ENCODE measurements at regions of chr19 and their contacts with region 1.

Region 1: GRCh38 chr19:15251749-15252397 is 19.6 kb upstream of the EPHX3 start:
- DNase-seq: peak; percentile 79
- H3K4me3 ChIP-seq: no peak overlapping the region
- H3K27ac ChIP-seq: peak overlapping the region; percentile 65
- H3K4me1 ChIP-seq: peaks cover 21% of the 10 kb centered on the region
- H3K27me3 ChIP-seq: no peaks in the 10 kb centered on the region
- CTCF ChIP-seq: peak; percentile 51

Region 2: DNA sequence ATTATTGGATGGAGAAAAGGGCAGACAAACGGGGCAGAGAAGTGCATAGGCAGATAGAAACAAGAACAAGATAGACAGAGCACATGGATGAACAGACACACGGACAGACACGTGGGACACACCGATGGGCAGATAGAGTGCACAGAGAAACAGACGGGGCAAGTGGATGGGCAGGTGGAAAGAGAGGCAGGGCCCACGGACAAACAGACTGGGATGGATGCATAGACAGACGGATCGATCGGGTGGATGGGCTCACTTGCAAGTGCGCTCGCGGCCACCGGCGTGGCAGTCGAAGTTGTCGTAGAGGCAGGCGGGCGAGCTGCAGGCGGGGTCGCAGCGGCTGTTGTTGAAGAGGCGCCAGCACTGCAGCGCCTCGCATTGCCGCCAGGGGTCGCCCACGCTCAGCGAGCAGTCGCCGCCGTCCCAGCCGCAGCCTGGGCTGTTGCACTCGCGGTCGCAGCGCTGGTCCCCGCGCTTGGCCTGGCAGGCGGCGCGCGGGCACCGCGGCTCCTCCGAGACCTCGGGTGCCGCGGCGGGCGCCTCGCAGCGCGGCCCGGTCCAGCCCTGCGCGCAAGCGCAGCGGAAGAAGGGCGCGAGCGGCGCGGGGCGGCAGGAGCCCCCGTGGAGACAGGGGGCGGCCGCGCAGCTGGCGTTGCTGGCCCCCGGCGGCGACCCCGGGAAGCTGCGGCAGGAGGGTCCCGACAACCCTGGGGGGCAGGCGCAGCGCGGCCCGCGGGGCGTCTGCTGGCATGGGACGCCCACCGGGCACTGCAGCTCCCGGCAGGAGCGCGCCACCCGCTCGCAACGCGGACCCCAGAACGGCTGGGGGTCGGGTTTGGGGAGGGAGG is 74.4 kb before region 1 on chr19:
- CTCF ChIA-PET with region 1: interaction called, 3 read pairs
- POLR2A ChIA-PET with region 1: no interaction called
- intact Hi-C with region 1: loop called (anchors 2 kb)
- DNase-seq: peak; percentile 89
- H3K4me3 ChIP-seq: peak overlapping the region; percentile 41
- H3K27ac ChIP-seq: no peak overlapping the region
- H3K4me1 ChIP-seq: peaks cover 17% of the 10 kb centered on the region
- H3K27me3 ChIP-seq: no peaks in the 10 kb centered on the region
- CTCF ChIP-seq: peak; percentile 85

Region 3: GRCh38 chr19:15379083-15379995 is 127.5 kb after region 1 on chr19 and contains the start of gene AKAP8:
- CTCF ChIA-PET with region 1: interaction called, 11 read pairs
- POLR2A ChIA-PET with region 1: no interaction called
- intact Hi-C with region 1: no loop called
- DNase-seq: peak; percentile 99
- H3K4me3 ChIP-seq: peak within 1 kb of the TSS; percentile 80
- H3K27ac ChIP-seq: peak within 1 kb of the TSS; percentile 99
- H3K4me1 ChIP-seq: peaks cover 11% of the 10 kb centered on the region
- H3K27me3 ChIP-seq: no peaks in the 10 kb centered on the region
- CTCF ChIP-seq: no peak
- total RNA-seq, gene AKAP8: 46.8 and 48.4 TPM in 2 replicates